Mammary epithelial cell (primary cell): ENCODE measurements at regions of chr1 and their contacts with region 1.

Region 1: GRCh38 chr1:18926315-18927081 is 24.1 kb upstream of the ALDH4A1 start:
- DNase-seq: peak; percentile 97
- H3K4me3 ChIP-seq: peak overlapping the region in 1 of 3 experiments; percentile 1
- H3K27ac ChIP-seq: peak overlapping the region; percentile 90
- H3K4me1 ChIP-seq: peaks cover 82% of the 10 kb centered on the region
- H3K27me3 ChIP-seq: no peaks in the 10 kb centered on the region
- CTCF ChIP-seq: no peak

Region 2: DNA sequence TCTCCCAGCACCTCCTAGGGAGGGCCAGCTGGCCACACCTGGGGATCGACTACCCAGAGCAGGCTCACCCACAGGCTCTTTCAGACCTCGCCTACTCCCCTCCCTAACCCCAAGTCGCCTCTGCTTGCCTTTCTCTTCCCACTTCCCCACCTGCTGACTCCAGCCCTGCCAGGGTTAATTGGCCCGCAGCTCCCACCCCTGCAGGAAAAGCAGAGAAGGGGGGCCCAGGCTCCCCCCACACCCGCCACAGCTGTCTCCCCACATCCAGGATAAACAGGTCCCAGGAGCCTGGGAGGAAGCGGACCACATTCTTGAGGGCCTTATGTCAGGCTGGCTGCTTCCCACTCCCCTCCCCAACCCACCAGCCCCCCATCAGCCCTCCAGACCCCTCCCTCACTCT is 112.1 kb before region 1 on chr1:
- CTCF ChIA-PET with region 1: no interaction called
- dilution Hi-C with region 1: no loop called
- in situ Hi-C with region 1: no loop called
- intact Hi-C with region 1: no loop called
- DNase-seq: no peak
- H3K4me3 ChIP-seq: no peak overlapping the region
- H3K27ac ChIP-seq: no peak overlapping the region
- H3K4me1 ChIP-seq: no peaks in the 10 kb centered on the region
- H3K27me3 ChIP-seq: no peaks in the 10 kb centered on the region
- CTCF ChIP-seq: no peak

Region 3: DNA sequence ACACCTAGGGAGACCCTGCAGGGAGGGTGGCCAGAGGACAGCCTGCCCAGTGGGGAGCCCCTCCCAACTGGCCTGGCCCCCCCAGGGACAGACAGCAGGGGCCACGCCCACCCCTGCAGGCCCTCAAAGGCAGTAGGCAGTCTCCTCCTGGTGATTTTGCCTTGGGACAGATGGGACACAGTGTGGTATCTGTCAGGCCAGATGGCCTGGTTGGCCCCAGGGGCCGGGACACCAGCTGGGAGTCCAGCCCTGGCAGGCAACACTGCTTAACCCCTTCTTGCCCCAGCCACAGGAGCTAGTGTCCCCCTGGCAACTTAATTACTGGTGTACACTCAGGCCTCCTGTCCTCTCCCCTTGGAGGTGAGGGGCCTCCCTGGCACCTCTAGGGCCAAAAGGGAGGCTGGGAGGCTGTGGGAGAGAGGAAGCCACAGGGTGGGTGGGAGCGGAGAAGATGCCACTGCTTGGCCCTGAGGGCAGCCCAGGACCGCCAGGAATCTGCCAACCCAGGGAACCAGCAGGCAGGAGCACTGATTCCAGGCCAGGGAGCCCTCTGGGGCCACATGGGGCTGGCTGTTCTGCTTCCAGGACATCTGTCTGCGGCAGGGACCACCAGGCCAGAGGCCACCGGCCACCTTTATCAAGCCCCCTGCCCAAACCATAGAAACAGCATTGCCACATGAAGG is 12.3 kb after region 1 on chr1:
- CTCF ChIA-PET with region 1: no interaction called
- dilution Hi-C with region 1: no loop called
- in situ Hi-C with region 1: no loop called
- intact Hi-C with region 1: loop called (anchors 1 kb)
- DNase-seq: no peak
- H3K4me3 ChIP-seq: no peak overlapping the region
- H3K27ac ChIP-seq: peak overlapping the region; percentile 96
- H3K4me1 ChIP-seq: peaks cover 70% of the 10 kb centered on the region
- H3K27me3 ChIP-seq: no peaks in the 10 kb centered on the region
- CTCF ChIP-seq: no peak